CD8-positive, alpha-beta T cell (primary cell): ENCODE measurements at regions of chr19 and their contacts with region 1.

Region 1: DNA sequence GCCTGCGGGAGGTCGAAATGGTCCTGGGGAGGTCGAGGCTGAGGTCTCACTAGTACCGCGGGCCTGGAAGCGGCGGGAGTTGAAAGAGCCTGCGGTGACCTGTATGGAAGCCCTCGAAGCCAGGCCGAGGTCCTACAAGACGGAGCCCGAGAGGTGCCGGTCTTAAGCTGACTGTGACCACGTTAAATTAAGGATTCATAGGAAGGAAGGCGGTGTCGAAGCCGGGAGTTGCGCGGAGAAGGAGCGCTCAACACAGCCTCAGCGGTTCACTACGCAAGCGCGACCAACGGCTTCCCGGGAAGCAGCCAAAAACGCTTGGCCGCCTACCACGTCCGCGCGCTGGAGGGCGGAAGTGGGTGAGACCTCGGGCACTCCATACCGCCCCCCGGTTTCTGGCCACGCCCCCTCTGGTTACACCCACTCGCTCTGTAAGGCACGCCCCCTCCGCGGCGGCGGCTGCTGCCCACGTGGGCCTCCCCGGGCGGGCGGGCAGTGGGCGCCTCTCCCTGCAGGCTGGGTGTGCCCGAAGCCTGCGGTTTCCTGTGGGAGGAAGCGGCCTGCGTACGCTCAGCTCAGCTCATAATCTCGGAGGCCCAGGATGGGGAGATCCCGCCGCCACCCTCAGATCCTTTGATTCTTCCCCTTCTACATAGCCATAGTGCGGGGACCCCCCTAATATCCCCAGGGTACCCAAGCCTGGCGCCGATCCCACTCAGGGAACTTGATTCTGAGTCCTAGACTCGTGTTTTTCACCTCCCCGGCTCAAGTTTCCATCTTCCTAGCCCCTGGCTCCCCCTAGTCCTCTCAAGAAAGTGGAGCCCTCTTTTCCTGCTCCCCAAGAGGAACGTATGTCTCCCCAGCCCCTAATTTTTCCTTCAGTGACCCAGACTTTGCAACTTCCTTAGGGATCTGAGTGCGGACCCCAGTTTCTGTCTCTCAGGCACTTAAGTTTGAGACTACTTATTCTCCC is 3.4 kb upstream of the EMP3 start:
- DNase-seq: peak; percentile 99 to 100 (median 100)
- ATAC-seq: peak; percentile 68
- H3K4me3 ChIP-seq: peak overlapping the region; percentile 76 to 78
- H3K4me3 Mint-ChIP-seq: peak overlapping the region; percentile 94
- H3K27ac ChIP-seq: peak overlapping the region; percentile 87 to 99
- H3K27ac Mint-ChIP-seq: peak overlapping the region; percentile 100
- H3K4me1 ChIP-seq: peaks cover 54% of the 10 kb centered on the region
- H3K4me1 Mint-ChIP-seq: peaks cover 60% of the 10 kb centered on the region
- H3K27me3 ChIP-seq: no peaks in the 10 kb centered on the region
- H3K27me3 Mint-ChIP-seq: no peaks in the 10 kb centered on the region
- CTCF ChIP-seq: no peak

Region 2: DNA sequence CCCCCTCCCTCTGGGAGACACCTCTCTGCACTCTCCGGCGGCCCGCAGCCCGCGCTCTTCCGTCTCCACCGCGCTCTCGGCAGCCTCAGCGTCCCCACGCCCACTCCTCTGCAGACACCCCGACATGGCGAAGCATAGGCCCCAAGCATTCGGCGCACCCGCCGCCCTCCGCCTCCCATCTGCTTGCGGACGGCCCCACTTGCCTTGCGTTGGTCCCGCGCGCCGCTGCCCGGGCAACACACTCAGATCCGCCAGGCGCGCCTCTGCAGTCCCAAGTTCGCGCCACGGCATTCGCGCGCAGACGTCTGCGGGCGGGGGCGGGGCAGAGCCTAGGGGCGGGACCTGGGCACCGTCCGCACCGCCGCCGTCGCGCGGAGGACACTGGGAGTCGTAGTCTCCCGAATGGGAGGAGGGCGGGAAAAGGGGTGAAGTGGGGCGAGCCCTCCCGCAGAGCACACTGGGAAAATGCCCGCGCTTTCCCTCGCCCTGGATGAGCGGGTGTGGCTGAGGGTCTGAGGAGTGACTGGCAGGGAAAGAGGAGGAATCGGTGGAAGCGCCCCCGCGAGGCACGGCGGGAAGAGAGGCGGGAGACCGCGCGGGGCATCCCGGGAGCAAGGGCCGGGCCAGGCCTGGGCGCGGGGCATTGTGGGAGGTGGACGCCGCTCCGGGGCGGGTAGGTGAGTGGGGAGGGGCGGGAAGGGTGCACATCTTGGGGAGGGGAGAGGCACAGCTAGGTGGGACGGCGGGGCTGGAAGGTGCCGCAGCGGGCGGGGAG is 151.7 kb before region 1 on chr19 and contains the starts of genes LIG1 and ZSWIM9:
- CTCF ChIA-PET with region 1: no interaction called
- POLR2A ChIA-PET with region 1: no interaction called
- intact Hi-C with region 1: loop called in 1 of 2 experiments (anchors 1 kb)
- DNase-seq: peak; percentile 82 to 95 (median 90)
- ATAC-seq: peak; percentile 81
- H3K4me3 ChIP-seq: peak within 1 kb of the TSS; percentile 96 to 100
- H3K4me3 Mint-ChIP-seq: peak within 1 kb of the TSS; percentile 98
- H3K27ac ChIP-seq: peak within 1 kb of the TSS; percentile 82 to 92
- H3K27ac Mint-ChIP-seq: peak within 1 kb of the TSS; percentile 97
- H3K4me1 ChIP-seq: peaks cover 7% of the 10 kb centered on the region
- H3K4me1 Mint-ChIP-seq: peaks cover 22% of the 10 kb centered on the region
- H3K27me3 ChIP-seq: no peaks in the 10 kb centered on the region
- H3K27me3 Mint-ChIP-seq: no peaks in the 10 kb centered on the region
- CTCF ChIP-seq: peak; percentile 25
- total RNA-seq, gene LIG1: 62.5 to 67.5 TPM
- total RNA-seq, gene ZSWIM9: 2.5 to 4.5 TPM

Region 3: GRCh38 chr19:48255376-48256303 is 66.3 kb before region 1 on chr19 and contains the start of gene CARD8:
- CTCF ChIA-PET with region 1: interaction called, 3 read pairs
- POLR2A ChIA-PET with region 1: interaction called, 3 read pairs
- intact Hi-C with region 1: loop called in 1 of 2 experiments (anchors 5 kb)
- DNase-seq: peak; percentile 58 to 93 (median 83)
- ATAC-seq: peak; percentile 87
- H3K4me3 ChIP-seq: peak within 1 kb of the TSS; percentile 78 to 89
- H3K4me3 Mint-ChIP-seq: peak within 1 kb of the TSS; percentile 96
- H3K27ac ChIP-seq: peak within 1 kb of the TSS; percentile 84 to 94
- H3K27ac Mint-ChIP-seq: peak within 1 kb of the TSS; percentile 97
- H3K4me1 ChIP-seq: peaks cover 69% of the 10 kb centered on the region
- H3K4me1 Mint-ChIP-seq: peaks cover 75% of the 10 kb centered on the region
- H3K27me3 ChIP-seq: no peaks in the 10 kb centered on the region
- H3K27me3 Mint-ChIP-seq: no peaks in the 10 kb centered on the region
- CTCF ChIP-seq: no peak
- total RNA-seq, gene CARD8: 58.8 to 69.1 TPM

Region 4: GRCh38 chr19:48333467-48334384 is 11.8 kb after region 1 on chr19:
- CTCF ChIA-PET with region 1: interaction called, 232 read pairs
- POLR2A ChIA-PET with region 1: interaction called, 198 read pairs
- intact Hi-C with region 1: loop called (anchors 1 kb)
- DNase-seq: peak; percentile 88 to 97 (median 93)
- ATAC-seq: peak; percentile 55
- H3K4me3 ChIP-seq: peak overlapping the region; percentile 73 to 78
- H3K4me3 Mint-ChIP-seq: peak overlapping the region; percentile 94
- H3K27ac ChIP-seq: peak overlapping the region; percentile 65 to 98
- H3K27ac Mint-ChIP-seq: peak overlapping the region; percentile 96
- H3K4me1 ChIP-seq: peaks cover 41% of the 10 kb centered on the region
- H3K4me1 Mint-ChIP-seq: peaks cover 51% of the 10 kb centered on the region
- H3K27me3 ChIP-seq: no peaks in the 10 kb centered on the region
- H3K27me3 Mint-ChIP-seq: no peaks in the 10 kb centered on the region
- CTCF ChIP-seq: peak; percentile 79

Region 5: GRCh38 chr19:48398375-48399235 is 76.7 kb after region 1 on chr19:
- CTCF ChIA-PET with region 1: no interaction called
- POLR2A ChIA-PET with region 1: no interaction called
- intact Hi-C with region 1: loop called (anchors 2 kb)
- DNase-seq: peak; percentile 73 to 94 (median 86)
- ATAC-seq: peak; percentile 77
- H3K4me3 ChIP-seq: peak overlapping the region; percentile 45 to 47
- H3K4me3 Mint-ChIP-seq: peak overlapping the region; percentile 63
- H3K27ac ChIP-seq: peak overlapping the region in 1 of 2 experiments; percentile 35
- H3K27ac Mint-ChIP-seq: no peak overlapping the region
- H3K4me1 ChIP-seq: peaks cover 42% of the 10 kb centered on the region
- H3K4me1 Mint-ChIP-seq: peaks cover 36% of the 10 kb centered on the region
- H3K27me3 ChIP-seq: peaks cover 20 to 32% of the 10 kb centered on the region in 2 experiments
- H3K27me3 Mint-ChIP-seq: peaks cover 22% of the 10 kb centered on the region
- CTCF ChIP-seq: no peak

Region 6: DNA sequence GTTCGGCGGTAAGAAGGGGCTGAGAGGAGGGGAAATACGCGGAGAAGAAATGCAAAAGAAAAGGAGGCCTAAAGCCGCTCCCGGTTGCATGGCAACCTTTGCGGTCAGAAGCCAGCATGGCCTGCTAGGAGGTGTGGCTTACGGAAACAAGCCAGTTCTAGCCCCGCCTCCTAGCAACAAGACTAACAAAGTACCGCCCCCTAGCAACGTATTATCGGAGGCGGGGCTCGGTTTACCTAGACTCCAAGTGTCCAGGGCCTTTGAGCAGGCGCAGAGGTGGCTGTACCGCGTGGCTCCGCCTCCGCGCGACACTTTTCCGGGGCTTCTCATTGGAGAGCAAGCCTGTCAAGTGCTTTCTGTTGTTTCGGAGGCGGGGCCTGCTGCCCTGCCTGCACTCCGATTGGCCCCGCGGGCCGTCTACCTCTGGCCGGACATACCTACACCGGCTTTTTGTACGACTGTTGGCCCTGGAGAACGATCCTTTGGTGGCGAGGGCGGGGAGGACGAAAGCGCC is 146.9 kb after region 1 on chr19:
- CTCF ChIA-PET with region 1: no interaction called
- POLR2A ChIA-PET with region 1: no interaction called
- intact Hi-C with region 1: loop called in 1 of 2 experiments (anchors 2 kb)
- DNase-seq: peak; percentile 98 to 100 (median 99)
- ATAC-seq: peak; percentile 85
- H3K4me3 ChIP-seq: peak overlapping the region; percentile 83 to 95
- H3K4me3 Mint-ChIP-seq: peak overlapping the region; percentile 90
- H3K27ac ChIP-seq: peak overlapping the region; percentile 75 to 90
- H3K27ac Mint-ChIP-seq: peak overlapping the region; percentile 85
- H3K4me1 ChIP-seq: peaks cover 15% of the 10 kb centered on the region
- H3K4me1 Mint-ChIP-seq: peaks cover 21% of the 10 kb centered on the region
- H3K27me3 ChIP-seq: no peaks in the 10 kb centered on the region
- H3K27me3 Mint-ChIP-seq: no peaks in the 10 kb centered on the region
- CTCF ChIP-seq: no peak